ENCODE measurements at regions of chr10 and their contacts with region 1.

Region 1: DNA sequence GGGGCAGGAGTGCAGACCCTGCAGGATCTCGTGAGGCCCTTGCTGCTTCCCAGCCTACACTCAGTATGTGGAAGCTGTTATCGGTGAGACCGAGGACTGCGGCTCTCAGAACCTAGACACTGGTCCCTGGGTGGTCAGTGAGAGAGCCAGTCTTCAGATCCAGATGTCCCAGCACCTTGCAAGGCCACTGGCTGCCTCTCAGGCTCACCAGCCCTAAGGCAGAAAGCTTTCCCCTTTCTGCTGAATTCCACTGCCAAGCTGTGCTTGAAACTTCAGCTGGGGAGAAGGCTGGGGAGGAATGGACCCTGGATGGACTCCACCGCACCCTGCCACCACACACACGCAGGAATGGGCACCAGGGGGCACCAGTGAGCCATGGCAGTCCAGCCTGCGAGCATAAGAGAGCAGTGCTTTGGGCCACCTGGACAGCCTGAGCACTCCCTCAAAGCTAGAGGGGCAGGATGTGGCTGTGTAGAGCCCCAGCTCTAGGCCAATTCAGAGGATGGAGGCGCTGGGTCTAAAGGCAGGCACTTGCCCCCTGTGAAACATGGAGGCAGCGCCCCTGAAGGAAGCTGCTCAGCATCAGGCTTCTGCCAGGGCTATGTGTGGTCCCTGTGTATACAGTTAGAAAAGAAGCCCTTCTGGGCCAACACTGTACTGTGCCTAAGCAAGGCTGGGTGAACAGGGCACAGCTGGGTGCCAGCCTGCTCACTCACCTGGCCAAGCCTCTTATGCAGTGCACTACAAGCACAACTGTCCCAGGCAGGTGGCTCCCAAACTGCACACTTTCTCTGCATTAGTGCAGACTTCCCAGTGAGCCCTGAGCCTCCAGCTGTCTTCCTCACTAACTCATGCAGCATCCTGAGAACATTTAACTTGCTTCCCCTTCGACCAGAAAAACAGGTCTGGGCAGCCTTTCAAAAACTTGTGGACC is 21.6 kb downstream of the TMEM72 start:
- DNase-seq: peak; percentile 73 to 99
- H3K4me3 ChIP-seq: no peak overlapping the region
- H3K27ac ChIP-seq: no peak overlapping the region
- H3K4me1 ChIP-seq: peaks cover 0 to 5% (median under 1%) of the 10 kb centered on the region in 4 experiments; a peak in 2 of 7 replicates
- H3K27me3 ChIP-seq: no peaks in the 10 kb centered on the region; a peak in 1 of 7 replicates
- CTCF ChIP-seq: peak; percentile 97 to 99 (median 98)
- EP300 ChIP-seq: no peak
- POLR2A ChIP-seq: no peak
- RAD21 ChIP-seq: peak; percentile 95 to 98

Region 2: DNA sequence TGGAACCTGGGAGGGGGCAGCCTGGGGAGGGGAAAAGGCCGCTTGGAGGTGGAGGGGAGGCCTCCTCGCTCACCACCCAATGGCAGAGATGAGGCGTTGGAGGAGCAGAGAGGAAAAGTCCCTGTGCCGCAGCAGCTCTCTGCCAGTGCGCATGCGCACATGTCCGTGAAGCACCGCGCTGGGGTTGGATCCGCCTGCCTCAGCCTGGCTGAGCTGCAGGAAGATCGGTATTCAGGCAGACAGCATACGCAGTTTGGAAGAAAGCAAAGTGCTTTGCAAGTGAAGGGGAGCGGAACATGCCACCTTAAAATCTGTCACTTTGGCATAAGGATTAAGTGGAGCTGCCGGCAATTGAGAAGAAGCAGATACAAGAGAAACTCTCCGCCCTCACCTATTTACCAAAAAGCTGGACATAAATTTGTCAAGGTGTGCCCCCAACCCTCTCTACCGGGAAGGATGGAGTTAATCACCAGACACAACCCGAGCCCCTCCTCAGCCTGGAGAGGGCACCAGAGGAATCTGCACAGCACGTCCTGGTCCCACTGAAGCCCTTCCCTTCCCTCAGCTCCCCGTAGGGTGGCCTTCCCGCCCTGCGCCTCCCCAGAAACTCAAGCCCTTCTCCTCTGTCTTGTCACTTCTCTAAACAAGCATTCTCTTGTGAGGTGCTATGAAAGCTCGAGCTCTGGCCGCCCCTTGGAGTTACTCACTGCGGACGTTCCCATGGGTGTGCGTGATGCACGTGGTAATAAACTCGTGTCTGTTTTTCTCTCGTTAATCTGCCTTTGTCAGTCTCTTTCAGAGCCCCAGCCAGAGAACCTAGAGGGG is 53.9 kb before region 1 on chr10:
- CTCF ChIA-PET with region 1: interaction called, 24 read pairs
- POLR2A ChIA-PET with region 1: interaction called, 3 read pairs
- DNase-seq: peak; percentile 88 to 90
- H3K4me3 ChIP-seq: peak overlapping the region; percentile 39 to 57 (median 47); a peak in 7 of 8 replicates
- H3K27ac ChIP-seq: no peak overlapping the region
- H3K4me1 ChIP-seq: peaks cover 0 to 7% (median 6%) of the 10 kb centered on the region in 4 experiments; a peak in 6 of 7 replicates
- H3K27me3 ChIP-seq: peaks cover 0 to 11% (median 5%) of the 10 kb centered on the region in 4 experiments; a peak in 6 of 7 replicates
- CTCF ChIP-seq: peak; percentile 26 to 58 (median 40); a peak in 3 of 4 replicates
- EP300 ChIP-seq: no peak
- POLR2A ChIP-seq: no peak
- RAD21 ChIP-seq: peak; percentile 42 to 54

Region 3: DNA sequence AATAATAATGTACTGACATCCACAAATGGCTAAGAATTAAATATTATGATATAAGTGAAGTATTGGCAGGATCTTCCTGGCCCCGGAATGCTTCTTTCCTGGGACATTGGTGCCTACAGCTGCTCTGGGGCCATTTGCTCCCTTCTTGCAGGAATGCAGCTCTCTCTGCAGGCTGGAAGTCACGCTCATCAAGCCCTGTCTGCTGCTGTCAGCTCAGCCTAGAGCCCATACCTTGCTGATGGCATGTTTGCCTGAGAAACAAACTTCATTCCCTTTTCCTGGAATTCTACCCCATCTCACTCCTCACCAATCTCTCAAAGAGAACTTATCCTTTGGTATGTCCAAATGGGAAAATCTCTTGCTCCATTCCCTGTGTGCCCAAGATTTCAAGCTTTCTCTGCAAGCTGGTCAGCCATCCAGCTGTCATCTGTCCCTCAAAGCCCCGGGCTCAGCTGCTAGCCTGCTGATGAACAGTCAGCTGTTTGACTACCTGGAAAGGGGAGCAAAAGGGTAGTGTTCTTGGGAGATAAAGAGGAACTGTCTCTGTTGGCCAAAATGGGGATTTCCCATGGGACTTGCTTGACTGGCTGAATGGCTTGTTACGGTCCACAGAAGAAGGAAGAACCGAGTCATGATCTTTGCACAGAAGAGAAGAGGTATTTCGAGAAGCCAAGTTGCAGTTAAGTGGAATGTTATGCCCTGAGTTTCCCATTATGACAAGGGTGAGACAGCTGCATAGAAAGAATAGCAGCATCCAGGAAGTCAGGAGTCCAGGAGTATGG is 14.8 kb after region 1 on chr10:
- CTCF ChIA-PET with region 1: interaction called, 117 read pairs
- POLR2A ChIA-PET with region 1: interaction called, 6 read pairs
- DNase-seq: peak in 1 of 2 experiments; percentile 28
- H3K4me3 ChIP-seq: no peak overlapping the region
- H3K27ac ChIP-seq: no peak overlapping the region
- H3K4me1 ChIP-seq: peaks cover 0 to 1% (median 0%) of the 10 kb centered on the region in 4 experiments; a peak in 1 of 7 replicates
- H3K27me3 ChIP-seq: no peaks in the 10 kb centered on the region; a peak in 1 of 7 replicates
- CTCF ChIP-seq: no peak
- EP300 ChIP-seq: no peak
- POLR2A ChIP-seq: no peak
- RAD21 ChIP-seq: no peak

Region 4: DNA sequence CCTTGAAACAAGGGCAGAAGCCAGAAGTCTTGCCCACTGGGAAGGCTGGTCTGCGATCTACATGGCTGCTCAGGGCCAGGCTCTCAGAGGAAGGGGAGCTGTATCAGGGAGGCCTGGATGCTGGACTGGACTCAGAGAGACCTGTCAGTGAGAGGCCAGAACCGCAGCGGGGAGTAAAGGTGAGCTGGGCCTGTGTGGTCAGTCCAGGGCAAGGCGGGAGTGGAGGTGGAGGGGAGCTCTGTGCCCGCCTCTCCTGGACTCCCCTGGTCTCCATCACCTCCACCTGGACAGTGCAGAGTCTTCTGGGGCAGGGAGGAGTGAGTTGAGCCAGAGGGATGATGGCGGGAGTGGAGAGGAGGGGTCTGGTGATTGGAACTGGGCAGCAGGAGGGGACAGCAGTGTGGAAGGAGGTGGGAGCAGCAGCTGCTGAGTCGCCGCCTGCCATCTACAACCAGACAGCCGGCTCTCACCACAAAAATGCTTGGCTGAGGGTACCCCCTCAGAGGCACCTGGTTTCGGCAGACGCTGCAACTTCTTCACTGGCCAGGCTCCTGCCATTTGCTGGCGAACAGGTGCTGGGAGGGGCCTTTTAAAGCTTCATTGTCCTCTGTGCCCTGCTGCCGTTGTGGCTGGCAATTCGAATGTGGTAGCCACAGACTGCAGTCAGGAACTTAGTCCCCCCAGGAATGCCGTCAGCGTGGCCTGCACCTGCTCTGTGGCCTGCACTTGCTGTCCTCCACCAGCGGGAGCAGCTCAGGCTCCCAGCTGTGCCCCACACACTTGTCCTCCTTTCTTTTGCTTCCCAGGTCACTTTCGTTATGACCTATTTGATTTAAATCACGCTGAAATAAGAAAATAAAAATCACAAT is 30.3 kb after region 1 on chr10:
- CTCF ChIA-PET with region 1: interaction called, 119 read pairs
- POLR2A ChIA-PET with region 1: interaction called, 7 read pairs
- DNase-seq: peak in 1 of 2 experiments; percentile 60
- H3K4me3 ChIP-seq: no peak overlapping the region
- H3K27ac ChIP-seq: no peak overlapping the region
- H3K4me1 ChIP-seq: peaks cover 25 to 47% (median 34%) of the 10 kb centered on the region in 4 experiments
- H3K27me3 ChIP-seq: peaks cover 0 to 7% (median 3%) of the 10 kb centered on the region in 4 experiments; a peak in 4 of 7 replicates
- CTCF ChIP-seq: peak; percentile 28 to 58 (median 54); a peak in 3 of 4 replicates
- EP300 ChIP-seq: no peak
- POLR2A ChIP-seq: no peak
- RAD21 ChIP-seq: peak in 1 of 2 experiments; percentile 25; a peak in 2 of 4 replicates

Region 5: GRCh38 chr10:44974628-44975431 is 42.0 kb after region 1 on chr10:
- CTCF ChIA-PET with region 1: interaction called, 119 read pairs
- POLR2A ChIA-PET with region 1: interaction called, 5 read pairs
- DNase-seq: peak in 1 of 2 experiments; percentile 88
- H3K4me3 ChIP-seq: peak overlapping the region; percentile 32 to 64 (median 46)
- H3K27ac ChIP-seq: no peak overlapping the region; the same call in 1 of the 2 replicates
- H3K4me1 ChIP-seq: peaks cover 25 to 51% (median 36%) of the 10 kb centered on the region in 4 experiments
- H3K27me3 ChIP-seq: no peaks in the 10 kb centered on the region; a peak in 1 of 7 replicates
- CTCF ChIP-seq: peak; percentile 70 to 87 (median 77)
- EP300 ChIP-seq: no peak
- POLR2A ChIP-seq: no peak
- RAD21 ChIP-seq: peak; percentile 53 to 77

Region 6: GRCh38 chr10:44981172-44982113 is 48.7 kb after region 1 on chr10:
- CTCF ChIA-PET with region 1: interaction called, 117 read pairs
- POLR2A ChIA-PET with region 1: interaction called, 5 read pairs
- DNase-seq: no peak
- H3K4me3 ChIP-seq: no peak overlapping the region
- H3K27ac ChIP-seq: no peak overlapping the region
- H3K4me1 ChIP-seq: peaks cover 18 to 37% (median 24%) of the 10 kb centered on the region in 4 experiments
- H3K27me3 ChIP-seq: no peaks in the 10 kb centered on the region
- CTCF ChIP-seq: no peak
- EP300 ChIP-seq: no peak
- POLR2A ChIP-seq: no peak
- RAD21 ChIP-seq: no peak

Region 7: DNA sequence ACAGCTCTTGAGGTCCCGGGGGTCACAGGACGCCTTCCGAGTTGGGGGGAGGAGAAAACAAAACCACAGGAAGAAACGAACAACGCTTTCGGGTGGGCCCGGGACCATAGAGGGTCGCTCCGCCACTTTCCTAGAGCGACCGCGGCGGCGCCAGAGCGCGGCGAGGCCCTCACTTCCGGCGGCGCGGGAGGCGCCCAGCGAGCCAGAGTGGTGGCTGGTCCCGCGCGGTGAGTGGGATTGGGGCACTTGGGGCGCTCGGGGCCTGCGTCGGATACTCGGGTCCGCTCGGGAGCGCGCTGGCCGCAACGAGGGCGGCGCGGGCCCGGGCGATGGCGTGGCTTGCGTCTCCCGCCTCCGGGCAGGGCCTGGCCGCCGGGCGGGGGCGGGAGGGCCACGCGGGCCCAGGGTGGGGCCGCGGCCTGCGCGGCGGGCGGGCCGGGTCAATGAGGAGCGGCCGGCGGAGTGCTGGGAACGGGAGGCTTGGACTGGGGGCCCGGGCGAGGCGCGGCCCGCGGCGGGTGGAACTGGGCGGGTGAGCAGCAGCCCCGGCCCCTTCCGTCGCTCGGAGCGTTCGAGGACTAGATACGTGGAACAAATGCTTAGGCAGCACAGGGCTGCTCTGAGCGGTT is 68.1 kb after region 1 on chr10 and contains the start of gene ZNF22:
- CTCF ChIA-PET with region 1: interaction called, 28 read pairs
- POLR2A ChIA-PET with region 1: interaction called, 11 read pairs
- DNase-seq: peak in 1 of 2 experiments; percentile 84
- H3K4me3 ChIP-seq: peak within 1 kb of the TSS; percentile 50 to 95 (median 64)
- H3K27ac ChIP-seq: no peak within 1 kb of the TSS; the same call in 1 of the 2 replicates
- H3K4me1 ChIP-seq: peaks cover 2 to 6% (median 4%) of the 10 kb centered on the region in 4 experiments; a peak in 4 of 7 replicates
- H3K27me3 ChIP-seq: peaks cover 0 to 4% (median 4%) of the 10 kb centered on the region in 4 experiments; a peak in 4 of 7 replicates
- CTCF ChIP-seq: no peak
- EP300 ChIP-seq: no peak
- POLR2A ChIP-seq: peak in 1 of 2 experiments; percentile 86; a peak in 2 of 3 replicates
- RAD21 ChIP-seq: no peak
- total RNA-seq, gene ZNF22: 42.5 and 45.2 TPM in 2 replicates

Region 8: DNA sequence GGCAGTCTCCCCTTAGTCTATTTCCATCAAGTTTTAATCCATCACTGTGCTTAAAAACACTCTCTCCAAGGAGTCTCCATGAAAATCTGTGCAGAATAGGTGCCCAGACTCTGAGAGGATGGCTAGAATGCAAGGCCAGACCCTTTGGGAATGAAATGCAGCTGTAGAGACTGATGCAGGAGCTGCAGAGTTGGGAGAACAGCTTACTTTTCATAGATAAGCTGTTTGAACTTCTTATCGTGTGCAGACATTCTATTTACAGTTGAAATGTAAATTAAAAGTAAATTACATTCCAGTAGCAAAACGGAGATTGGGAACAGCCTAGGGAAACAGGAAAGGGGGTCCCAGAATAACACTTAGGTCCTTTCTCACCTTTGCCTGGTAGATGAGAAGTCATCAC is 82.8 kb after region 1 on chr10:
- CTCF ChIA-PET with region 1: no interaction called
- POLR2A ChIA-PET with region 1: no interaction called
- DNase-seq: no peak
- H3K4me3 ChIP-seq: no peak overlapping the region
- H3K27ac ChIP-seq: no peak overlapping the region
- H3K4me1 ChIP-seq: no peaks in the 10 kb centered on the region
- H3K27me3 ChIP-seq: no peaks in the 10 kb centered on the region
- CTCF ChIP-seq: no peak
- EP300 ChIP-seq: no peak
- POLR2A ChIP-seq: no peak
- RAD21 ChIP-seq: no peak

Region 9: DNA sequence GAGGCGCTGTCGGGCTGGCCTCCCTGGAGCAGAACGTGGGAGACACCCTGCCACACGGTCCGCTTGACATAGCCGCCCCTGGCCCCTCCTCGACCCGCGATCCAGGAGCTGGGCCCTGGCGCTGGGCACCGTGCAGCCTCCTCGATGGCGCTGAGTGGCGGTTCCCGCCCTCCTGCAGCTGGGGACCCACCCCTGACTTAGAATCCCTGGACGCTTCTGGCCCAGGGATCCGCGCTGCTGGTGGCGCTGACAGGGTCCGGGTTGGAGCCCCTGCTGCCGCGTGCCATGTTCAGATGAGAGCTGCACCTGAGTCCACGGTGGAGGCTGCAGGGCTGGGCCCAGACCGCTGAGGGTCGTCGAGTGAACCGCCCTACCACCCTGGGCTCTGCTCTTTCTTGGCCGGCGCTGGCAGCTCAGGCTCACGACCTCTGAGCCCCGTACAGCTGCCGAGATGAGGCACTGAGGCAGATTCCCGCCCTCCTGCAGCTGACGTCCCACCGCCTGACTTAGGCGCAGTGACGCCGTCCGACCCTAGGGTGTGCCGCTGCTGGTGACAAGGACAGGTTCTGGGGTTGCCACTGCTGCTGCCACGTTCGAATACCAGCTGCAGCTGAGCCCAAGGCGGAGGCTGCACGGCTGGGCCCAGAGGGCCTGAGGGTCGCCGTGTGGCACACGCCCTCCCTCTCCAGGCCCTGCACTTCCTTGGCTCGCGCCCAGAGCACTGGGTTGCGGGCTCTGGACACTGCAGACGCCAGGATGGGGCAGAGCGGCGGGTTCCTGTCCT is 266.0 kb after region 1 on chr10:
- CTCF ChIA-PET with region 1: no interaction called
- POLR2A ChIA-PET with region 1: no interaction called
- DNase-seq: no peak
- H3K4me3 ChIP-seq: no peak overlapping the region
- H3K27ac ChIP-seq: no peak overlapping the region
- H3K4me1 ChIP-seq: no peaks in the 10 kb centered on the region
- H3K27me3 ChIP-seq: no peaks in the 10 kb centered on the region
- CTCF ChIP-seq: no peak
- EP300 ChIP-seq: no peak
- POLR2A ChIP-seq: no peak
- RAD21 ChIP-seq: no peak